ENCODE measurements at regions of chr3 and their contacts with region 1.

Region 1: GRCh38 chr3:133573054-133573628 is 345 bp upstream of the CDV3 start:
- DNase-seq: peak; percentile 100
- H3K4me3 ChIP-seq: peak overlapping the region; percentile 75 to 86 (median 80)
- H3K27ac ChIP-seq: peak overlapping the region; percentile 93 to 98 (median 96)
- H3K4me1 ChIP-seq: peaks cover 0 to 66% (median 44%) of the 10 kb centered on the region in 4 donors
- H3K27me3 ChIP-seq: no peaks in the 10 kb centered on the region
- CTCF ChIP-seq: peak in 1 of 4 experiments; percentile 19
- EP300 ChIP-seq: peak in 1 of 4 donors; percentile 41
- POLR2A ChIP-seq: no peak

Region 2: DNA sequence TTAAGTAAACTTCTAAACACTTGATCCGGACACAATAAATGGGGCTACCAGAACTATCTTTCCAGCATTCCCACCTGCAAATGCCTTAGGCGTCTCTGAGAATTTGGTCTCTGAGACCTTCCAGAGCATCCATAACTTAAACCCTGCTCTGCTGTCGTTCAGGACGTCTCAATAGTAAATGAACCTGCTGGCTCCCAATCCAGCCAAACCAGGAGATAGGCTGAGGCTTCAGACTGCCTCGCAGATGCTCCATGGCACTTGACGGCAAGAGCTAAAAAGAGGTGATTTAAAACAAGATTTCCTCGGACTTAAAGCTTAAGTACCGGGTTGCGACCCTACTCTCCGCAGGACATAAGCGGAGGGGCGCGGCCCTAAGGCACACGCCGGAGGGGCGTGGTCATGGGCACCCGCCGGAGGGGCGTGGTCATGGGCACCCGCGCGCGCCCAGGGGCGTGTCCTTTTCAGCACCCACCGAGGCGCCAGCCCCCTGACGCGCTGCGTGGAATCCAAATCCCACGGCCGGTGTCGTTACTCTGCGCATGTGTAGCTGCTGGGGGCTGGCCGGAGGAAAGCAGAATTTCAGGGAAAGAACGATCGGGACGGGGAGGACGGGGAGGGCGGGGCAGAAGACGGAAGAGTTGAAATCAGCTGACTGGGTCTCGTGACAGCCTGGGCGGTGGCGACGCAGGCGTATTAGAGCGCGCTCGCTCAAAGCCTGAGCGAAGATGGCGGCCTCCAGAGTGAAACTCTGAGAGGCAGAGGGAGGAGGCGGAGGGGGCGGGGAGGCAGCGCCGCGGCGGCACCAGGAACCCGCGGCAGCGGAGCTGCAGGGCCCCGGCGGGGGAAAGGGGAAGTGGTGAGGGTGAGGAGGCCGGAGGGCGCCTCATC is 1156.1 kb before region 1 on chr3 and contains the start of gene DNAJC13:
- intact Hi-C with region 1: loop called (anchors 5 kb)
- DNase-seq: peak; percentile 97
- H3K4me3 ChIP-seq: peak within 1 kb of the TSS; percentile 92 to 100 (median 96)
- H3K27ac ChIP-seq: peak within 1 kb of the TSS; percentile 87 to 95 (median 94)
- H3K4me1 ChIP-seq: peaks cover 0 to 31% (median 20%) of the 10 kb centered on the region in 4 donors
- H3K27me3 ChIP-seq: no peaks in the 10 kb centered on the region
- CTCF ChIP-seq: no peak
- EP300 ChIP-seq: peak in 1 of 4 donors; percentile 36
- POLR2A ChIP-seq: peak; percentile 57 to 74
- total RNA-seq, gene DNAJC13: 33.2 to 55.9 (median 46.5) TPM

Region 3: GRCh38 chr3:133040696-133041523 is 532.2 kb before region 1 on chr3:
- intact Hi-C with region 1: loop called (anchors 5 kb)
- DNase-seq: peak; percentile 75
- H3K4me3 ChIP-seq: no peak overlapping the region
- H3K27ac ChIP-seq: peak overlapping the region in 1 of 4 donors; percentile 66
- H3K4me1 ChIP-seq: peaks cover 0 to 22% (median 20%) of the 10 kb centered on the region in 4 donors
- H3K27me3 ChIP-seq: peaks cover 0 to 29% (median 12%) of the 10 kb centered on the region in 3 donors
- CTCF ChIP-seq: peak; percentile 32 to 60 (median 48)
- EP300 ChIP-seq: no peak
- POLR2A ChIP-seq: no peak

Region 4: DNA sequence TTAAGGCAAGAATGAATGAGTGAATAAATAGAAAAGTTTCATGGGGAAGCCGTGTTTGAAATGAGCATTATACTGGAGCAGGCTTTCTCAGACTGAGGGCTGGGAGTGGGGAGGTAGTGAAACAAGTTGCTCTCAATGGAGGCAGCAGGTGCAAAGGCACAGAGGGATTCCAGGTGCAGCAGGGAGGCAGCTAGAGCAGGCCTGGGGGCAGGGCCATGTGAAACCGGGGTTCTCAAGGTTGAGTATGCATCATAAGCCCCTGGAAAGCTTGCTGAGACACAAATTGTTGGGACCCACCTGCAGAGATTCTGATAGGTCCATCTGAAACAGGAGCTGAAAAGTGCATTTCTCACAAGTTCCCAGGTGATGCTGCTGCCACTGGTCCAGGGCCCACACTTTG is 128.0 kb before region 1 on chr3:
- intact Hi-C with region 1: no loop called
- DNase-seq: no peak
- H3K4me3 ChIP-seq: no peak overlapping the region
- H3K27ac ChIP-seq: no peak overlapping the region
- H3K4me1 ChIP-seq: no peaks in the 10 kb centered on the region
- H3K27me3 ChIP-seq: no peaks in the 10 kb centered on the region
- CTCF ChIP-seq: no peak
- EP300 ChIP-seq: no peak
- POLR2A ChIP-seq: no peak

Region 5: GRCh38 chr3:133474251-133474801 is 98.8 kb before region 1 on chr3:
- intact Hi-C with region 1: loop called (anchors 5 kb)
- DNase-seq: peak; percentile 91
- H3K4me3 ChIP-seq: no peak overlapping the region
- H3K27ac ChIP-seq: peak overlapping the region; percentile 61 to 79 (median 74)
- H3K4me1 ChIP-seq: peaks cover 0 to 17% (median 15%) of the 10 kb centered on the region in 4 donors
- H3K27me3 ChIP-seq: no peaks in the 10 kb centered on the region
- CTCF ChIP-seq: no peak
- EP300 ChIP-seq: no peak
- POLR2A ChIP-seq: no peak

Region 6: GRCh38 chr3:134364061-134364935 is 791.2 kb after region 1 on chr3:
- intact Hi-C with region 1: loop called (anchors 10 kb)
- DNase-seq: peak; percentile 98
- H3K4me3 ChIP-seq: peak overlapping the region; percentile 10 to 37 (median 26)
- H3K27ac ChIP-seq: peak overlapping the region; percentile 98 to 100 (median 100)
- H3K4me1 ChIP-seq: peaks cover 0 to 100% (median 98%) of the 10 kb centered on the region in 4 donors
- H3K27me3 ChIP-seq: no peaks in the 10 kb centered on the region
- CTCF ChIP-seq: no peak
- EP300 ChIP-seq: peak in 2 of 4 donors; percentile 39 to 78
- POLR2A ChIP-seq: no peak

Region 7: GRCh38 chr3:135084405-135084804 is 1511.3 kb after region 1 on chr3:
- intact Hi-C with region 1: no loop called
- DNase-seq: no peak
- H3K4me3 ChIP-seq: no peak overlapping the region
- H3K27ac ChIP-seq: no peak overlapping the region
- H3K4me1 ChIP-seq: no peaks in the 10 kb centered on the region
- H3K27me3 ChIP-seq: no peaks in the 10 kb centered on the region
- CTCF ChIP-seq: no peak
- EP300 ChIP-seq: no peak
- POLR2A ChIP-seq: no peak

Measured in sigmoid colon (tissue), 7 donors.